Pancreas (tissue), 10 donors: ENCODE measurements at regions of chr1 and their contacts with region 1.

Region 1: DNA sequence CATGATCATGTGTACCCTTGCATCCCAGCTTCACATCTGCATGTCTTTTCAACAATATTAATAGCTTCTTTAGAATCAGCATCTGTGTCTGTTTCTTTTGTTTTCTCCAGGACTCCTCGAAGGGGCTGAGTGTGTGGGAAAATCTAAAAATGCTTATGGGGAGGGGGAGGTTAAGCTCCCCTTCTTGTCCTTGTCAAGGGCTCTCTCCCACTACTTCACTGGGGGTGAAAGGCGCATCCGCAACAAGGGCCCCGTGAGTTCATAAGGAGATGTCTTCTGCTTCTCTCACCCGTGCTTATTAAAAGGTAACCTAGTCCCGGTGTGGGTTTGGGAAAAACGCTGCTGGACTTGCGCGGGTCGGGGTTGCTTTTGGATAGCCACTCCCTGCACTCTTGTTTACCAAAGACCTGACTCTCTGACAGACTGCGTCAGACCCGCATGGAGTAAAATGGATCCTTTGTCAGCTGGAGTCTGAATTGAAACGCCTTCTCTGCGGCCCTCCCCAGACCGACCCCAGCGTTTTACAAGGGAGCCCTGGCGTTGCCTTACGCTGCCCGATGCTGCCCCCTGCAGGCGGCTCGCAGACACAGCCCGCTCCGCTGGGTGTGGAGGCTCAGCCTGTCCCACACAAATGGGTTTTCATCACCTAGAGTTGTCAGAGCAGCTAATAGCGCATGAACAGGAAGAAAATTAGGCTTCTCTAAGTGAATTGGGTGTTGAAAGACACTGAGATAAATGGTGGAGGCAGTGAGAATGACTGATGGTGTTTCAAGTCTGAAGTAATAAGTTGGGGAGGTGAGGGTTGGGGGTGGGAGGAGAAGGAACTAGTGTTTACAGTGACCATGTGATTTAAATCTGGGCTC is 53.8 kb downstream of the IER5 start:
- DNase-seq: peak; percentile 70 to 97 (median 87)
- ATAC-seq: peak; percentile 93 to 99 (median 98)
- H3K4me3 ChIP-seq: peak overlapping the region in 1 of 4 donors; percentile 30
- H3K27ac ChIP-seq: no peak overlapping the region
- H3K4me1 ChIP-seq: peaks cover 0 to 12% (median 0%) of the 10 kb centered on the region in 3 donors
- H3K27me3 ChIP-seq: no peaks in the 10 kb centered on the region
- CTCF ChIP-seq: peak; percentile 92 to 96 (median 94)

Region 2: GRCh38 chr1:180515864-180516388 is 626.4 kb before region 1 on chr1:
- intact Hi-C with region 1: loop called in 1 of 3 experiments (anchors 10 kb)
- DNase-seq: peak in 4 of 6 donors; percentile 47 to 75 (median 52)
- ATAC-seq: peak; percentile 95 to 100 (median 100)
- H3K4me3 ChIP-seq: no peak overlapping the region
- H3K27ac ChIP-seq: no peak overlapping the region
- H3K4me1 ChIP-seq: peaks cover 0 to 9% (median 3%) of the 10 kb centered on the region in 3 donors
- H3K27me3 ChIP-seq: no peaks in the 10 kb centered on the region
- CTCF ChIP-seq: peak; percentile 41 to 71 (median 66)

Region 3: GRCh38 chr1:181038399-181038873 is 103.9 kb before region 1 on chr1:
- intact Hi-C with region 1: loop called in 1 of 3 experiments (anchors 5 kb)
- DNase-seq: peak in 4 of 6 donors; percentile 36 to 67 (median 40)
- ATAC-seq: peak; percentile 54 to 82 (median 66)
- H3K4me3 ChIP-seq: no peak overlapping the region
- H3K27ac ChIP-seq: no peak overlapping the region
- H3K4me1 ChIP-seq: peaks cover 0 to 23% (median 0%) of the 10 kb centered on the region in 3 donors
- H3K27me3 ChIP-seq: no peaks in the 10 kb centered on the region
- CTCF ChIP-seq: peak; percentile 23 to 54 (median 46)

Region 4: GRCh38 chr1:181088079-181089016 is 54.0 kb before region 1 on chr1 and contains the start of gene IER5:
- intact Hi-C with region 1: loop called in 2 of 3 experiments (anchors 5 to 10 kb)
- DNase-seq: peak; percentile 92 to 98 (median 96)
- ATAC-seq: peak; percentile 90 to 96 (median 94)
- H3K4me3 ChIP-seq: peak within 1 kb of the TSS; percentile 66 to 94 (median 80)
- H3K27ac ChIP-seq: peak within 1 kb of the TSS; percentile 11 to 79 (median 57)
- H3K4me1 ChIP-seq: peaks cover 0 to 5% (median 3%) of the 10 kb centered on the region in 3 donors
- H3K27me3 ChIP-seq: no peaks in the 10 kb centered on the region
- CTCF ChIP-seq: no peak
- total RNA-seq, gene IER5: 2.6 to 6.8 (median 3.5) TPM

Region 5: DNA sequence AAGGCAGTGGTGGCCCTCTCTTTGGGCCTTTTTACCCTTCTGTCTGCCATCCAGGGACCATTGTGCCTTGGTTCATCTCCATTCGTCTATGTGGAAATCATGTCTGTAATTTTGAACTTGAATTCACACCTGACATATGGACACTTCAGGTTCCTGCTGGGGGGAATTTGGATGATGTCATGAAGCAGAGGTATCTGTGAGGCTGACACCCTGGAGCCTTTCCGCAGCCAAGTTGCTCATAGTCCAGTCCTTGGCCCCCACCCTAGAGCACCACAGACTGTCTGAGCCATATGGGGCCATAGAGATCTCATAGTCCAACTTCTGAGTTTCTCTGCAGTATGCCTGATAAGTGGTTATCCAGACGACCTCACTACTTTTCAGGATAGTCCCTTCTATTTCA is 193.3 kb after region 1 on chr1:
- intact Hi-C with region 1: no loop called
- DNase-seq: no peak
- ATAC-seq: no peak
- H3K4me3 ChIP-seq: no peak overlapping the region
- H3K27ac ChIP-seq: no peak overlapping the region
- H3K4me1 ChIP-seq: no peaks in the 10 kb centered on the region
- H3K27me3 ChIP-seq: no peaks in the 10 kb centered on the region
- CTCF ChIP-seq: no peak